Mammary epithelial cell (primary cell): ENCODE measurements at regions of chr10 and their contacts with region 1.

Region 1: DNA sequence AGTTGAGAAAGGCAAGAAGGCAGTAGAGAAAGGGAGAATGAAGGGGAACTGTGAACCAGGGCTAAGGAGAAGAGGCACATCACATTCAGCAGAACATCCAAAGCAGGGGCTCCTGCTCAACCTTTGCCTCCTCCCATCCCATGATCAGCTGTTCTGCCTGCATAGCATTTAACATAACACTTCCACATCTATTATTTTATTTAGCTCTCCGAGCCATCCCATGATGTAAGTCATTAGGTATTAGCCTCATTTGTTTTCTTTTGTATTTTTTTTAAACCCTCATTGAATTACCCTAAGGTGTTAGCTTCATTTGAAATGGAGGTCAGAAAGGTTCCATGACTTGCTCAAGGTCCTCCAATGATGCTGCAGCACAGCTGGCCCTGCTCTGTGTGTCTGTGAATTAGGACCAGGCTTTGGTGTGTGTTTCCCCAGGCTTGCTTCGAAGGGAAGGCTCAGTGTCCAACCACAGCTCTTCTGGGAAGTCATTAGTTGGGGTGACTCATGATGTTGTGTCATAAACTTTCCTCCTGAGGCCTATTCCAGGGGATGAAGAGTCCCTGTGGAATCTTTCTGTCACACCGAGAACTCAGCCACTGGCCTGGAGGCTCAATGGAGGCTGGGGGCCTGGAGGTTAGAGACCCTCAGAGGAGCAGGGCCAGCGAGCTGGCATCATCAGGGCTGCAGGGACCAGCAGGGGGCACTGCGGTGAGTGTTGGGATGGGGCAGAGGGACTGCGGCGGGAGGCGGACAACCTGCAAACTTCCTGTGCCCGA is 16.5 kb downstream of the NPFFR1 start:
- DNase-seq: peak; percentile 97
- H3K4me3 ChIP-seq: no peak overlapping the region
- H3K27ac ChIP-seq: peak overlapping the region; percentile 53
- H3K4me1 ChIP-seq: peaks cover 26% of the 10 kb centered on the region
- H3K27me3 ChIP-seq: no peaks in the 10 kb centered on the region
- CTCF ChIP-seq: peak in 1 of 2 donors; percentile 12

Region 2: DNA sequence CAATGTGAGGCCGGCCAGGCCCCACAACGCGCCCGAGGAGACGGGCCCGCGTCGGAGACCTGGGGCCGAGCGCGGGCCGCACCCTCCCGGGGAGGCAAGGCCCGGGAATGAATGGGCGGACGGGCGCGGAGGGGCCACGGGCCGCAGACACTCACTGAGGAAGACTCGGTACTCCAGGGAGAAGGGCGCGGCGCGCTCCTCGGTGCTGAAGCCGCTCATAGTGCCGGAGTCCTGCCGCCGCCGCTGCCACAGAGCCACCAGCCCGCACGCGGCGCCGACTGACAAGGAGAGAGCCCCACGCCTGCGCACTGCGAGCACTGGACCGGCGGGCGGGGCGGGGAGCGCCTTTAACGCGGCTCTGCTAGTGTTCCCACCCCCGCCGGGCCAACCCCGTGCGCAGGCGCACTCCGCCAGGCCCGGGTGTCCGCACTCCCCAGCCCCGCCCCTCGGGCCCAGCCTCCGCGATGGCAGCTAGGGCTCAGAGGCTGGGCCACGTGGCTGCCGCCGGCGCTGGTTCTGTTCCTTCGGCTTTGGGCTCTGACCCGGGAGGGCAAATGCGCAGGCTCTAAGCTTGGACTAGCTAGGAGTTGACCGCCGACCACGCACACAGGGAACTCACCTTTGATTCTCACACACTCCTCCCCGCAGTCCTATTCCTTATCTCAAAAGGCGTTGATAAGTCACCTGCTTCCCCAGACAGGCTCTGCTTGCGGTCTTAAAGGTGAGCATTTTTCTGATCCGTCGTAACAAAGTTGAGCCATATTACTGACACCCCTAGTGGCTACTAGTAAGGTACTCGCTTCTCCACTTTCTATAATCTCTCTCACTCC is 34.0 kb before region 1 on chr10 and contains the start of gene PPA1:
- CTCF ChIA-PET with region 1: interaction called, 4 read pairs
- dilution Hi-C with region 1: no loop called
- in situ Hi-C with region 1: no loop called
- intact Hi-C with region 1: loop called (anchors 2 kb)
- DNase-seq: peak; percentile 95
- H3K4me3 ChIP-seq: peak within 1 kb of the TSS; percentile 64 to 94 (median 77)
- H3K27ac ChIP-seq: peak within 1 kb of the TSS; percentile 84
- H3K4me1 ChIP-seq: peaks cover 14% of the 10 kb centered on the region
- H3K27me3 ChIP-seq: no peaks in the 10 kb centered on the region
- CTCF ChIP-seq: peak; percentile 21 to 31
- total RNA-seq, gene PPA1: 170 to 218 TPM

Region 3: DNA sequence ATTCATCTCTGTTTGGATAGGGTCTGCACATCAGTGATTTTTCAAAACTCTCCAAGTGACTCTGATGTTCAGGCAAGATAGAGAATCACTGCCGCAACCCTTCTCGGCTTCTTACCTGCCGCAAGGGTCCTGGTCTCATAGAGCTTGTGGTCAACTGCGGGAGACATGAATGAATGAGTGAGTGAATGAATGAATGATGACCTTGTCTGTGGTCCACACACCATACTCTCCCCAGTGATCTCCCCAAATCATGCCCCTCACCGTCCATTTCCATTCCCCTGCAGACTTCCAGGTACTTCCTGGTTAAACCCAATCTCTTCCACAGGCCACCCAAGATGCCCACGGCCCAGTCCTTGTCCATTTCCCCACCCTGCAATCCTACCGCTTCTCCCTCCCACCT is 22.4 kb after region 1 on chr10:
- CTCF ChIA-PET with region 1: no interaction called
- dilution Hi-C with region 1: no loop called
- in situ Hi-C with region 1: no loop called
- intact Hi-C with region 1: loop called (anchors 1 kb)
- DNase-seq: no peak
- H3K4me3 ChIP-seq: no peak overlapping the region
- H3K27ac ChIP-seq: no peak overlapping the region
- H3K4me1 ChIP-seq: peaks cover 5% of the 10 kb centered on the region
- H3K27me3 ChIP-seq: no peaks in the 10 kb centered on the region
- CTCF ChIP-seq: no peak

Region 4: DNA sequence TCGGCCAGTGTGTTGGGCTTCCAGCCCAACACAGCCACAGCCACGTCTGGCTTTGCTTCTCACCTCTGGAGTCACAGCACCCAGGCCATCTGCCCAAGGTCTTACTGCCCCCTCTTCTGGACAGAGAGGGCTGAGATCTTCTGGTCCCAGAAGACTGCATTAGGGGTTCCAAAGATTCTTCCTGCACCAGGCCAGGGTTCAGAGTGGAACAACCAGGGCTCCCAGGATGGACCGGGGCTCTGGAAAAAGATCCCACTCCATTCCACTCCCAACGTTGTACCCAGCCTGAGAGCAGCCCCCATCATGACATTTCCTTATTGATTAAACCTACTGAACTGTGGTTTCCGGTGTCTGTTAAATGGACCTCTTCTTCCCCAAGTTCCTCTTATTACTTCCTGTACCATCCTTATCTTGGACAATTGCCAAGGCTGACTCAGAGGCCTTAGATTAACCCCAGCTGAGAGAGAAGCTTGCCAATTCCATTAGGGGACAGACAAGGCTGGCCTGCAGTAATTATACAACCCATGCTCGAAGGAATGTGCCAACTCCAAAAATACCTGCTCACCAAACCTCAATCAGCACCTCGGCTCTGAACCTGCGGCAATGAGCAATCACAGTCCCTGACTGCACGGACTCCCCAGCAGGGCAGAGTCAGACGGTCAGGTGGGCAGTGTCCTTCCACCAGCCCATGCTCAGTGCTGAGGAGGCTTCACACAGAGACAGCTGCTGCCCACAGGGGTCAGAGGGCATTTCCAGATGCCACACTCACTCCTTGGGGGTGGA is 64.3 kb after region 1 on chr10:
- CTCF ChIA-PET with region 1: no interaction called
- dilution Hi-C with region 1: no loop called
- in situ Hi-C with region 1: no loop called
- intact Hi-C with region 1: loop called (anchors 5 kb)
- DNase-seq: peak; percentile 96
- H3K4me3 ChIP-seq: no peak overlapping the region
- H3K27ac ChIP-seq: no peak overlapping the region
- H3K4me1 ChIP-seq: peaks cover 20% of the 10 kb centered on the region
- H3K27me3 ChIP-seq: no peaks in the 10 kb centered on the region
- CTCF ChIP-seq: peak in 1 of 2 donors; percentile 48

Region 5: DNA sequence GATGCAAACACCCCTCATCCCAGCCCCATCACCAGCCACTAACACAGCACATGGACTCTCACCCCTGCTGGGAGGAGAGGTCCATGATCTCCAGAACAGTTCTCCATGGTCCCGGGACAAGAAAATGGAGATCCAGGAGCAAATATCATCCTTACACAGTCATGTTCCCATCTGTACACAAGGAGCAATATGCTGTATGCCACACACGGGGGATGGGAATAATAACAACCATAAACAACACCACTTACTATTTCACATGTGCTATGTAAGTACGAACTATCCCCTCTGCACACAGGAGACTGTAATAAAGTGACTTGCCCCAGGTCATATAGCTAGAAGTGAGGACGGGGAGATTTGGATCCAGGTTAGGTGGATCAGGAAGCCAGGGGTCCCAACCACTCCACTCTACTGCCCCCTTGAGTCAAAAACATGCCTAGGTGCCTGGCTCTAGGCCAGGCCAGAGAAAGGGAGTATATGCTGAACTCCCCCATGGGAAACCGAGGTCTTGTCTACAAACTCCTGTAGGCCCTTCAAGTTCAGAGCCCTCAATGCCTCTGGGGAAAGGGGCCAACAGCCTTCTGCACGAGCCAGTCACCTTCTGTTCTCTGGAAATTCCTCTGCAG is 81.0 kb after region 1 on chr10:
- CTCF ChIA-PET with region 1: interaction called, 3 read pairs
- dilution Hi-C with region 1: no loop called
- in situ Hi-C with region 1: no loop called
- intact Hi-C with region 1: loop called (anchors 1 kb)
- DNase-seq: peak; percentile 32
- H3K4me3 ChIP-seq: no peak overlapping the region
- H3K27ac ChIP-seq: no peak overlapping the region
- H3K4me1 ChIP-seq: no peaks in the 10 kb centered on the region
- H3K27me3 ChIP-seq: no peaks in the 10 kb centered on the region
- CTCF ChIP-seq: peak; percentile 60 to 76

Region 6: GRCh38 chr10:70391654-70392053 is 124.3 kb after region 1 on chr10:
- CTCF ChIA-PET with region 1: interaction called, 15 read pairs
- dilution Hi-C with region 1: no loop called
- in situ Hi-C with region 1: no loop called
- intact Hi-C with region 1: no loop called
- DNase-seq: no peak
- H3K4me3 ChIP-seq: no peak overlapping the region
- H3K27ac ChIP-seq: no peak overlapping the region
- H3K4me1 ChIP-seq: peaks cover 6% of the 10 kb centered on the region
- H3K27me3 ChIP-seq: no peaks in the 10 kb centered on the region
- CTCF ChIP-seq: no peak